ENCODE measurements at regions of chr1 and their contacts with region 1.

Region 1: GRCh38 chr1:39973503-39974135 is 18.7 kb downstream of the MFSD2A start:
- DNase-seq: no peak
- H3K4me3 ChIP-seq: no peak overlapping the region
- CTCF ChIP-seq: peak; percentile 92

Region 2: DNA sequence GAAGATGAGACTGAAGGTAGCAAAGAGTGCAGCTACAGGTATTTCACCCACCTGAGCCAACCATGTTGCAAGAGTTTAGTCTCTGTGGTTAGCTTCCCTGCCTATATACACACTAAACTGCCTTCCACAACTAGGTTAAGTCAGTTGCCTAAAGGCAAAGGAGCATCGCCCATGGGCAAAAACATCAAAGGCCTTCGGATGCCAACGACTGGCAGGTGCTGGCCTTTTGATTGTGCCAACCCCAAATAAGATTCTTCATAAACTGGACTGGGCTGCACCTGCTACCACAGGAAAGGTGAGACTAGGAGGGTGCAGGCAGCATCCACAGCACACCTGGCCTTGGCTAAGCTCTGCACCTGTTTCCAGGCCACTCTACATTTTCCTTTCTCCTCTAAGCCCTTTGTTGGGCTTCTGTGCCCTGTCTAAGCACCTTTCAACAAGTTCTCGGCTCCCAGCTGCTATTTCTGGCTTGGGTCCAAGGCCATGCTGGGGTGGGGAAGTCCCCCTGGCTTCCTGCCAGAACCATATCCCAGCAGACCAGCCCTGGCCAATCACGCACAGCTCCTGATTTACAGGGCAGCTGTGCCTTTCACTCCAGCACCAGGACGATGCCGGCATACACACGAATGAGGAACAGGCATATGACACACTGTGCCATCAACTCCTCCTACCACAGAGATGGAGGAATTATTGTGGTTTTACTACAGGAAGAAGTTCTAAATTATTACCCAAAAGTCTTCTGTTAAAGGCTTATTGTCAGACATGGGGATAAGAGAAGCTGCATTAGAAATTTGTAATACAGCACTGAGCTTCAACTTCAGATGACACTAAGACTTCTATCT is 128.1 kb before region 1 on chr1:
- CTCF ChIA-PET with region 1: interaction called, 22 read pairs
- POLR2A ChIA-PET with region 1: no interaction called
- DNase-seq: peak; percentile 38
- H3K4me3 ChIP-seq: no peak overlapping the region
- CTCF ChIP-seq: no peak

Region 3: GRCh38 chr1:39892601-39893595 is 80.7 kb before region 1 on chr1:
- CTCF ChIA-PET with region 1: interaction called, 53 read pairs
- POLR2A ChIA-PET with region 1: no interaction called
- DNase-seq: peak; percentile 45
- H3K4me3 ChIP-seq: no peak overlapping the region
- CTCF ChIP-seq: no peak

Region 4: GRCh38 chr1:39919545-39919944 is 54.1 kb before region 1 on chr1:
- CTCF ChIA-PET with region 1: interaction called, 183 read pairs
- POLR2A ChIA-PET with region 1: no interaction called
- DNase-seq: no peak
- H3K4me3 ChIP-seq: no peak overlapping the region
- CTCF ChIP-seq: peak; percentile 48

Region 5: GRCh38 chr1:39954816-39955546 is 18.6 kb before region 1 on chr1 and contains the start of gene MFSD2A:
- CTCF ChIA-PET with region 1: interaction called, 202 read pairs
- POLR2A ChIA-PET with region 1: interaction called, 6 read pairs
- DNase-seq: peak; percentile 42
- H3K4me3 ChIP-seq: peak within 1 kb of the TSS; percentile 66
- CTCF ChIP-seq: no peak

Region 6: GRCh38 chr1:40032240-40032891 is 58.7 kb after region 1 on chr1:
- CTCF ChIA-PET with region 1: interaction called, 59 read pairs
- POLR2A ChIA-PET with region 1: no interaction called
- DNase-seq: no peak
- H3K4me3 ChIP-seq: no peak overlapping the region
- CTCF ChIP-seq: peak; percentile 70

Region 7: DNA sequence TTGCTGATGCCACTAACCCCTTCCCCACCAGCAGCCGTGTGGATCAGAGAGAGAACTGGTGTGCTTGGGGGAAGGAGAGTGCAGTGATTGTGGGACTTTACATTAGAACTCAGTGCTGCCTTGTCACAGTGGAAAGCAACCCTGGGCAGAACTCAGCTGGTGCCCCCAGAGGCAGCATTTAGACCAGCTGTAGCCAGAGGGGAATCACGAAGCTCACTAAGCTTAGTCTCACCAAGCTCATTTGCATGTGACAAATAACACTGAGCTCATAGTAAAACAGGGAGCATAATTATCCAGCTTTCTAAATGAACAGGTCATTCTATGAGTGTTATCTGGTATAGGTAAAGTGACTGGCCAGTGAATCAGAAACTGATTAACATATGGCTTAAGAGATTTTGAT is 390.1 kb after region 1 on chr1:
- CTCF ChIA-PET with region 1: no interaction called
- POLR2A ChIA-PET with region 1: no interaction called
- DNase-seq: no peak
- H3K4me3 ChIP-seq: no peak overlapping the region
- CTCF ChIP-seq: no peak

Measured in AG04449 (cell line).